ENCODE measurements at regions of chr14 and their contacts with region 1.

Region 1: DNA sequence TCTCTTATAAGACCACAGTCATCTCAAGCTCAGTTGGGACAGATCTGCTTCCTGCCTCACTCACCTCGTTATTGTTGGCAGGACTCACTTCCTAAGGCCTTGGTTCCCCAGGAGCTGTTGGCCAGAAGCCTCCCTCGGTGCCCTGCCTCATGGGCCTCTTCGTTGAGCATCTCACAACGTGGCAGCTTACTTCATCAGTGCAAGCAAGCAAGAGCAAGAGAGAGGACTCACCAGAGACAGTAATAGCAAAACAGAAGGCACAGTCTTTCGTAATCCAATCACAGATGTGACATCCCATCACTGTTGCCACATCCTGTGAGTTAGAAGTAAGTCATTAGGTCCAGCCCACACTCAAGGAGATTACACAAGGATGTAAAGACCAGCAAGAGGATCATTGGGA is 5.1 kb upstream of the NUMB start:
- DNase-seq: peak; percentile 79
- H3K4me3 Mint-ChIP-seq: peak overlapping the region; percentile 65
- H3K27ac Mint-ChIP-seq: peak overlapping the region; percentile 89
- H3K4me1 Mint-ChIP-seq: peaks cover 66% of the 10 kb centered on the region
- H3K27me3 Mint-ChIP-seq: no peaks in the 10 kb centered on the region

Region 2: GRCh38 chr14:73491256-73492042 is 28.0 kb after region 1 on chr14:
- CTCF ChIA-PET with region 1: no interaction called
- POLR2A ChIA-PET with region 1: interaction called, 15 read pairs
- intact Hi-C with region 1: no loop called
- DNase-seq: peak; percentile 85
- H3K4me3 Mint-ChIP-seq: peak overlapping the region; percentile 77
- H3K27ac Mint-ChIP-seq: peak overlapping the region; percentile 74
- H3K4me1 Mint-ChIP-seq: peaks cover 43% of the 10 kb centered on the region
- H3K27me3 Mint-ChIP-seq: no peaks in the 10 kb centered on the region

Region 3: DNA sequence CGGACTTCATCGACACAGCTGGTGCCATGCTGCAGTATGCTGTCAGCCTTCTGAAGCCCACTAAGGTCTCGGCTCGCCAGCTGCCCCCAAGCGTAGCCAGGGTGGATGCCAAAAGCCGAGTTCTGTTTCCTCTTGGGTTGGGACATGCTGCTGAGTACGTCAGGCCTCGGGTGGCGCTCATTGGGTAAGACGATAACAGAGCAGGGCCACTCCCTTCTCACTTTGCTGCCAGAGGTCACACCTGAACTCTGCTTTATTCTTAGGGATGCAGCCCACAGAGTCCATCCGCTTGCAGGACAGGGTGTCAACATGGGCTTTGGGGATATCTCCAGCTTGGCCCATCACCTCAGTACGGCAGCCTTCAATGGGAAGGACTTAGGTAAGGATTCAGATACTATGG is 497.8 kb after region 1 on chr14:
- CTCF ChIA-PET with region 1: no interaction called
- POLR2A ChIA-PET with region 1: no interaction called
- intact Hi-C with region 1: no loop called
- DNase-seq: no peak
- H3K4me3 Mint-ChIP-seq: no peak overlapping the region
- H3K27ac Mint-ChIP-seq: no peak overlapping the region
- H3K4me1 Mint-ChIP-seq: no peaks in the 10 kb centered on the region
- H3K27me3 Mint-ChIP-seq: no peaks in the 10 kb centered on the region